CD8-positive, alpha-beta T cell (primary cell): ENCODE measurements at regions of chr16 and their contacts with region 1.

Region 1: DNA sequence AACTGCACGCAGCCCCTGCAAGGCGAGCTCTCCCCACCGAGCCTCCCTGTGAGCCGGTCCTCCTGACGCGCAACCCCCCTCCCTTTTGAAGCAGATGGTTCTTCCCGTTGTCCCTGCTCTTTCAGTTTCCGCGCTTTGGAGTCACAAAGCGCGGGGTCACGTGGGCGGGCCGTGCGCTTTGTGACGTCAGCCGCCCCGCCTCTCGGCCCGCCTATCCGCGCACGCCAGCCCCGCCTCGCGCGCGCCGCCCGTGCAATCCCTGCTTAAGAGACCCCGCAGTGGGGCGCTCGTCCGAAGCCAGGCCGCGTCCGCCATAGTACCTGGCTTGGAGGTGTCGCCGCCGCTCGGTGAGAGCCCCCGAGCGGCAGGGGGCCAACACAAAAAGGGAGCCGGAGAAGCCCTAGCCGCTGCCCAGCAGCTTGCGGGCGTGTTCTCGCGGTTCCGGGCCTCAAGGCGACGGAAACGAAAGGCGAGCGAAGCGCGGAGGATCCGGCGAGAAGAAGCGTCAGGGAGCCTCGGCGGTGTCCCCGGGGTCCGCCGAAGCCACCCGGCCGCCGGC is at the start of gene RBBP6:
- DNase-seq: peak; percentile 84 to 98 (median 92)
- ATAC-seq: peak; percentile 85
- H3K4me3 ChIP-seq: peak within 1 kb of the TSS; percentile 74 to 89
- H3K4me3 Mint-ChIP-seq: peak within 1 kb of the TSS; percentile 94
- H3K27ac ChIP-seq: peak within 1 kb of the TSS; percentile 96 to 99
- H3K27ac Mint-ChIP-seq: peak within 1 kb of the TSS; percentile 100
- H3K4me1 ChIP-seq: peaks cover 29% of the 10 kb centered on the region
- H3K4me1 Mint-ChIP-seq: peaks cover 38% of the 10 kb centered on the region
- H3K27me3 ChIP-seq: no peaks in the 10 kb centered on the region
- H3K27me3 Mint-ChIP-seq: no peaks in the 10 kb centered on the region
- CTCF ChIP-seq: peak; percentile 24
- total RNA-seq, gene RBBP6: 172 to 177 TPM

Region 2: GRCh38 chr16:23452572-23453337 is 1086.6 kb before region 1 on chr16 and contains the start of gene COG7:
- CTCF ChIA-PET with region 1: no interaction called
- POLR2A ChIA-PET with region 1: no interaction called
- intact Hi-C with region 1: loop called in 1 of 2 experiments (anchors 10 kb)
- DNase-seq: peak; percentile 62 to 91 (median 83)
- ATAC-seq: peak; percentile 89
- H3K4me3 ChIP-seq: peak within 1 kb of the TSS; percentile 96 to 100
- H3K4me3 Mint-ChIP-seq: peak within 1 kb of the TSS; percentile 95
- H3K27ac ChIP-seq: peak within 1 kb of the TSS; percentile 43 to 66
- H3K27ac Mint-ChIP-seq: peak within 1 kb of the TSS; percentile 89
- H3K4me1 ChIP-seq: peaks cover 17% of the 10 kb centered on the region
- H3K4me1 Mint-ChIP-seq: peaks cover 33% of the 10 kb centered on the region
- H3K27me3 ChIP-seq: no peaks in the 10 kb centered on the region
- H3K27me3 Mint-ChIP-seq: no peaks in the 10 kb centered on the region
- CTCF ChIP-seq: no peak
- total RNA-seq, gene COG7: 13.3 to 14.7 TPM

Region 3: GRCh38 chr16:23595951-23596720 is 943.2 kb before region 1 on chr16 and contains the start of gene NDUFAB1:
- CTCF ChIA-PET with region 1: no interaction called
- POLR2A ChIA-PET with region 1: no interaction called
- intact Hi-C with region 1: loop called in 1 of 2 experiments (anchors 5 kb)
- DNase-seq: peak; percentile 83 to 94 (median 90)
- ATAC-seq: peak; percentile 100
- H3K4me3 ChIP-seq: peak within 1 kb of the TSS; percentile 81 to 82
- H3K4me3 Mint-ChIP-seq: peak within 1 kb of the TSS; percentile 82
- H3K27ac ChIP-seq: peak within 1 kb of the TSS; percentile 67 to 77
- H3K27ac Mint-ChIP-seq: peak within 1 kb of the TSS; percentile 88
- H3K4me1 ChIP-seq: peaks cover 13% of the 10 kb centered on the region
- H3K4me1 Mint-ChIP-seq: peaks cover 41% of the 10 kb centered on the region
- H3K27me3 ChIP-seq: no peaks in the 10 kb centered on the region
- H3K27me3 Mint-ChIP-seq: no peaks in the 10 kb centered on the region
- CTCF ChIP-seq: peak; percentile 95
- total RNA-seq, gene NDUFAB1: 32.3 to 36.0 TPM

Region 4: GRCh38 chr16:24428756-24429155 is 110.6 kb before region 1 on chr16:
- CTCF ChIA-PET with region 1: no interaction called
- POLR2A ChIA-PET with region 1: no interaction called
- intact Hi-C with region 1: no loop called
- DNase-seq: no peak
- ATAC-seq: no peak
- H3K4me3 ChIP-seq: no peak overlapping the region
- H3K4me3 Mint-ChIP-seq: no peak overlapping the region
- H3K27ac ChIP-seq: no peak overlapping the region
- H3K27ac Mint-ChIP-seq: no peak overlapping the region
- H3K4me1 ChIP-seq: no peaks in the 10 kb centered on the region
- H3K4me1 Mint-ChIP-seq: no peaks in the 10 kb centered on the region
- H3K27me3 ChIP-seq: no peaks in the 10 kb centered on the region
- H3K27me3 Mint-ChIP-seq: peaks cover 21% of the 10 kb centered on the region
- CTCF ChIP-seq: no peak

Region 5: GRCh38 chr16:24516900-24517669 is 22.3 kb before region 1 on chr16:
- CTCF ChIA-PET with region 1: interaction called, 4 read pairs
- POLR2A ChIA-PET with region 1: interaction called, 3 read pairs
- intact Hi-C with region 1: loop called in 1 of 2 experiments (anchors 1 kb)
- DNase-seq: peak; percentile 42 to 83 (median 77)
- ATAC-seq: peak; percentile 81
- H3K4me3 ChIP-seq: no peak overlapping the region
- H3K4me3 Mint-ChIP-seq: no peak overlapping the region
- H3K27ac ChIP-seq: no peak overlapping the region
- H3K27ac Mint-ChIP-seq: no peak overlapping the region
- H3K4me1 ChIP-seq: no peaks in the 10 kb centered on the region
- H3K4me1 Mint-ChIP-seq: peaks cover 4% of the 10 kb centered on the region
- H3K27me3 ChIP-seq: no peaks in the 10 kb centered on the region
- H3K27me3 Mint-ChIP-seq: peaks cover 6% of the 10 kb centered on the region
- CTCF ChIP-seq: peak; percentile 93

Region 6: DNA sequence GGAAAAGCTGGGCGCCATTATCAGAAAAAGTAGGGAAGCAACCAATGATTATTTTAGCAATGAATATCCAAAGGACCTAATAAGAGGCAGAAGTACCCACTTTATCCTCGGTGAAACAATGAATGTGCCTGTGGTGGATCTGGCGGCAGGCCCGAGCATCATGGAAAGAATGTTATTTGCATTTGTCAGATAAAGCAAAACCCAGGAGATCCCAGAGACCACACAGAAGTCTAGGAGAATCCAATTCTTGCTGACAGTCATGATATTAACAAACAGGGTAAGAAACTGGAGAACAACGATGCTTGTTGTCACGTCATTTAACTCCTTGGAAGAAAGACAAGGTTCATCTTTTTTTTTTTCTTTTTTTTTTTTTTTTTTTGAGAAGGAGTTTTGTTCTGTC is 178.0 kb after region 1 on chr16:
- CTCF ChIA-PET with region 1: no interaction called
- POLR2A ChIA-PET with region 1: no interaction called
- intact Hi-C with region 1: no loop called
- DNase-seq: no peak
- ATAC-seq: no peak
- H3K4me3 ChIP-seq: no peak overlapping the region
- H3K4me3 Mint-ChIP-seq: no peak overlapping the region
- H3K27ac ChIP-seq: no peak overlapping the region
- H3K27ac Mint-ChIP-seq: no peak overlapping the region
- H3K4me1 ChIP-seq: no peaks in the 10 kb centered on the region
- H3K4me1 Mint-ChIP-seq: peaks cover 2% of the 10 kb centered on the region
- H3K27me3 ChIP-seq: peaks cover 0 to 2% of the 10 kb centered on the region in 2 experiments
- H3K27me3 Mint-ChIP-seq: peaks cover 17% of the 10 kb centered on the region
- CTCF ChIP-seq: no peak

Region 7: GRCh38 chr16:24729362-24729984 is 190.1 kb after region 1 on chr16 and contains the start of gene TNRC6A:
- CTCF ChIA-PET with region 1: no interaction called
- POLR2A ChIA-PET with region 1: interaction called, 4 read pairs
- intact Hi-C with region 1: loop called (anchors 1 kb)
- DNase-seq: peak; percentile 61 to 92 (median 76)
- ATAC-seq: peak; percentile 78
- H3K4me3 ChIP-seq: peak within 1 kb of the TSS; percentile 93 to 97
- H3K4me3 Mint-ChIP-seq: peak within 1 kb of the TSS; percentile 95
- H3K27ac ChIP-seq: peak within 1 kb of the TSS; percentile 97 to 98
- H3K27ac Mint-ChIP-seq: peak within 1 kb of the TSS; percentile 98
- H3K4me1 ChIP-seq: peaks cover 40% of the 10 kb centered on the region
- H3K4me1 Mint-ChIP-seq: peaks cover 45% of the 10 kb centered on the region
- H3K27me3 ChIP-seq: no peaks in the 10 kb centered on the region
- H3K27me3 Mint-ChIP-seq: no peaks in the 10 kb centered on the region
- CTCF ChIP-seq: no peak
- total RNA-seq, gene TNRC6A: 65.2 to 73.4 TPM

Region 8: GRCh38 chr16:25031441-25032307 is 492.3 kb after region 1 on chr16:
- CTCF ChIA-PET with region 1: no interaction called
- POLR2A ChIA-PET with region 1: no interaction called
- intact Hi-C with region 1: loop called (anchors 5 kb)
- DNase-seq: peak; percentile 79 to 97 (median 90)
- ATAC-seq: peak; percentile 99
- H3K4me3 ChIP-seq: peak overlapping the region; percentile 88 to 94
- H3K4me3 Mint-ChIP-seq: peak overlapping the region; percentile 96
- H3K27ac ChIP-seq: peak overlapping the region; percentile 65 to 68
- H3K27ac Mint-ChIP-seq: peak overlapping the region; percentile 94
- H3K4me1 ChIP-seq: peaks cover 14% of the 10 kb centered on the region
- H3K4me1 Mint-ChIP-seq: peaks cover 39% of the 10 kb centered on the region
- H3K27me3 ChIP-seq: no peaks in the 10 kb centered on the region
- H3K27me3 Mint-ChIP-seq: no peaks in the 10 kb centered on the region
- CTCF ChIP-seq: no peak

Region 9: GRCh38 chr16:25257504-25257955 is 718.2 kb after region 1 on chr16 and contains the start of gene ZKSCAN2:
- CTCF ChIA-PET with region 1: no interaction called
- POLR2A ChIA-PET with region 1: no interaction called
- intact Hi-C with region 1: loop called (anchors 2 kb)
- DNase-seq: peak; percentile 57 to 90 (median 77)
- ATAC-seq: peak; percentile 79
- H3K4me3 ChIP-seq: peak within 1 kb of the TSS; percentile 68 to 86
- H3K4me3 Mint-ChIP-seq: peak within 1 kb of the TSS; percentile 96
- H3K27ac ChIP-seq: peak within 1 kb of the TSS; percentile 79 to 94
- H3K27ac Mint-ChIP-seq: peak within 1 kb of the TSS; percentile 95
- H3K4me1 ChIP-seq: peaks cover 38% of the 10 kb centered on the region
- H3K4me1 Mint-ChIP-seq: peaks cover 62% of the 10 kb centered on the region
- H3K27me3 ChIP-seq: no peaks in the 10 kb centered on the region
- H3K27me3 Mint-ChIP-seq: no peaks in the 10 kb centered on the region
- CTCF ChIP-seq: no peak
- total RNA-seq, gene ZKSCAN2: 9.3 to 9.4 TPM